ENCODE measurements at regions of chr2 and their contacts with region 1.

Region 1: GRCh38 chr2:112606488-112606902 is 22.1 kb downstream of the CHCHD5 start:
- DNase-seq: peak; percentile 72
- H3K4me3 ChIP-seq: no peak overlapping the region
- H3K27ac ChIP-seq: peak overlapping the region; percentile 27
- H3K4me1 ChIP-seq: no peaks in the 10 kb centered on the region
- H3K27me3 ChIP-seq: no peaks in the 10 kb centered on the region
- CTCF ChIP-seq: no peak

Region 2: GRCh38 chr2:112726497-112727190 is 120.1 kb after region 1 on chr2:
- intact Hi-C with region 1: loop called (anchors 2 kb)
- DNase-seq: peak; percentile 91
- H3K4me3 ChIP-seq: no peak overlapping the region
- H3K27ac ChIP-seq: no peak overlapping the region
- H3K4me1 ChIP-seq: no peaks in the 10 kb centered on the region
- H3K27me3 ChIP-seq: no peaks in the 10 kb centered on the region
- CTCF ChIP-seq: peak; percentile 94